ENCODE measurements at regions of chr3 and their contacts with region 1.

Region 1: GRCh38 chr3:5799398-5799797 is 611.9 kb downstream of the EDEM1 start:
- DNase-seq: no peak
- H3K4me3 ChIP-seq: no peak overlapping the region
- H3K27ac ChIP-seq: no peak overlapping the region
- H3K4me1 ChIP-seq: no peaks in the 10 kb centered on the region
- H3K27me3 ChIP-seq: no peaks in the 10 kb centered on the region
- CTCF ChIP-seq: no peak
- POLR2A ChIP-seq: no peak

Region 2: DNA sequence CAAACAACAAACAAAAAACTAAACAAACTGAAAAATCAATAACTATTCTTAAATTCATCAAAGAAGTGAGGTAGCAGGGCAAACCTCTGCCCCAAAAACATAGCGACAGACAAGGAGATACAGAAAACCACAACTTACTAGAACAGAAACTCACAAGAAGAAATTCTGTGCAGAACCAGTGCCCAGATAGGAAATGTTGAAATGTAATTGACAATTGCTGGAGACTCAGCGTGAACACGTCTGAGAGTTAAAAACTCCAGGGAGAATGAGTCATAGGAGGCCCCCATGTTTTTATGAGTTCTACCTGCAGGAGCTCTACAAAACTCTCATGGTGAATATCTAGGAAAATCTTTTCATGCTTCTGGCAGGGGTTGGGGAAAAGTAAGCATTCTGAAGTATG is 1591.7 kb before region 1 on chr3:
- intact Hi-C with region 1: no loop called
- DNase-seq: no peak
- H3K4me3 ChIP-seq: no peak overlapping the region
- H3K27ac ChIP-seq: no peak overlapping the region
- H3K4me1 ChIP-seq: no peaks in the 10 kb centered on the region
- H3K27me3 ChIP-seq: no peaks in the 10 kb centered on the region
- CTCF ChIP-seq: no peak
- POLR2A ChIP-seq: no peak

Region 3: GRCh38 chr3:4401441-4401840 is 1398.0 kb before region 1 on chr3:
- intact Hi-C with region 1: loop called (anchors 5 kb)
- DNase-seq: no peak
- H3K4me3 ChIP-seq: no peak overlapping the region
- H3K27ac ChIP-seq: no peak overlapping the region
- H3K4me1 ChIP-seq: no peaks in the 10 kb centered on the region
- H3K27me3 ChIP-seq: no peaks in the 10 kb centered on the region
- CTCF ChIP-seq: no peak
- POLR2A ChIP-seq: no peak

Measured in vagina (tissue), 2 donors.